ENCODE measurements at regions of chr7 and their contacts with region 1.

Region 1: DNA sequence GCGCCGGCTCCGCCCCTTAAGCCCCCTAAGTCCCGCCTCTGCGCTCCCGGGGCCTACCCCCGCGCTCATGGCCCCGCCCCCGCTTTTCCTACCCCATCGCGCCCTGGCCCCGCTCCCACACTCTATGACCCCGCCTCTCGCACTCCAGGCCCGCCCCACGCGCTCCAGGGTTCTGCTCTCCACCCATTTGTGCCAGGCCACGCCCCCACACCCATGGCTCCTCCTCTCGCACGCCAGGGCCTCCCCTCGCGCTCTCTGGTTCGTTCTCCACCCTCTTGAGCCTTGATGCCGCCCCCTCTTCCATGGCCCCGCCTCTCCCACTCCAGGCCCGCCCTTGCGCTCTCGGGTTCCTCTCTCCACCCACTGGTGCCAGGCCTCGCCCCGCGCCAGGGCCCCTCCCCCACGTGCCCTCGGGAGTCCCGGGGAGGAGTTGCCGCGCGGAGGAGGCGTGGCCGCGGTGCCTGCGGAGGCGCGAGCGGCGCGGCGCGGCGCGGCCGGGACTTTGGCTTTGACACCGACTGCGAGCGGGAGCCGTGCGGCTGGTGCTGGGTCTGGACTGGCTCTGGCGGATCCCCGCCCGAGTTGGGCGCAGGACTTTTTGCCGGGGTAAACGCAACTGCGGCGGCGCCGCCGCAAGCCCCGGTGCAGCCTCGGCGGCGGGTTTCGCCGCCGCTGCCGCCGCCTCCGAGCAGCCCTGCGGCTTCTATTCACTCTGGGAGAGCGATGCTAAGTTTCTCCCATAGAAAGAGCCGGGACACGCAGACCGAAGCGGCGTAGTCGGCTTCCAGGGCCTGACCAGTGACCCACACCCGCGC is at the start of gene EEPD1:
- DNase-seq: peak; percentile 97 to 100
- H3K4me3 ChIP-seq: peak within 1 kb of the TSS; percentile 71
- H3K27ac ChIP-seq: peak within 1 kb of the TSS; percentile 24; the same call in 1 of the 2 replicates
- H3K4me1 ChIP-seq: peaks cover 63% of the 10 kb centered on the region
- H3K27me3 ChIP-seq: no peaks in the 10 kb centered on the region
- CTCF ChIP-seq: no peak
- total RNA-seq, gene EEPD1: 6.0 and 9.4 TPM in 2 replicates

Region 2: GRCh38 chr7:35465791-35466336 is 687.1 kb before region 1 on chr7:
- CTCF ChIA-PET with region 1: no interaction called
- POLR2A ChIA-PET with region 1: no interaction called
- intact Hi-C with region 1: no loop called
- DNase-seq: no peak
- H3K4me3 ChIP-seq: no peak overlapping the region
- H3K27ac ChIP-seq: no peak overlapping the region
- H3K4me1 ChIP-seq: no peaks in the 10 kb centered on the region
- H3K27me3 ChIP-seq: no peaks in the 10 kb centered on the region
- CTCF ChIP-seq: no peak

Region 3: DNA sequence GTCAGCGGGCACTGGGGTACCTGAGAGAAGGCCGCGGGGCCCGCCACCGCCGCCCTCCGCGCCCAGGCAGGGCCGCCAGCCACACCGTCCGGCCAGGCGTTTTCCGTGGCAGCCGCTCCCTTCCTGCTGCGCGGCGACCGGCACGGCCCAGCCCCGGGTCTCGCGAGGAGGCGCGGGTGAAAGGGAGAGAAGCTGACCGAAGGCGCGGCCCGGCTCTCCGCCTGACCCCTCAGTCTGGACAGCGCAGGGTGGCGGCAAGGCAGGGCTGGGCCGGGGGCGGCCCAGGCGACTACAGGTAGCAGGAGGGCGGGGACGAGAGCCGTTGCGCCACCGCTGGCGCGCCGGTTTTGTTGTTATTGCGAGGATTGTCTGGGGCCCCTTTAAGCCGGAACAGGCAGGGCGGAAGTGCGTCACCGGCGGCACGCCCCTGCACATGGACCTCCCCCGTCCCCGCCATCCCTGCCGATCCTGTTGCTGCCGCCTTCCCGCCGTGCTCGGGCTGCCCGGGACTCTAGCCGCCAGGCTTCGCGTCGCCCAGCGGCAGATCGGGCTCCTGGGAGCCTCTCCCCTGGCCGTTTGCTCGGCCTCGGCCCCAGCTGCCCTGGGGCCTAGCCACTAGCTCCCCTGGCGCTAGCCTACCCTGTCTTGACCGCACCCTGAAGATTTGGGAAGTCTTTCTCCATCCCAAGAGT is 458.0 kb before region 1 on chr7 and contains the start of gene HERPUD2:
- CTCF ChIA-PET with region 1: no interaction called
- POLR2A ChIA-PET with region 1: no interaction called
- intact Hi-C with region 1: loop called (anchors 10 kb)
- DNase-seq: peak; percentile 92 to 99
- H3K4me3 ChIP-seq: peak within 1 kb of the TSS; percentile 96
- H3K27ac ChIP-seq: peak within 1 kb of the TSS; percentile 77
- H3K4me1 ChIP-seq: peaks cover 61% of the 10 kb centered on the region
- H3K27me3 ChIP-seq: no peaks in the 10 kb centered on the region
- CTCF ChIP-seq: no peak
- total RNA-seq, gene HERPUD2: 33.8 and 53.4 TPM in 2 replicates

Region 4: GRCh38 chr7:36037121-36037662 is 115.8 kb before region 1 on chr7:
- CTCF ChIA-PET with region 1: no interaction called
- POLR2A ChIA-PET with region 1: no interaction called
- intact Hi-C with region 1: loop called (anchors 1 kb)
- DNase-seq: peak; percentile 94 to 100
- H3K4me3 ChIP-seq: peak overlapping the region; percentile 20; the same call in 1 of the 2 replicates
- H3K27ac ChIP-seq: peak overlapping the region; percentile 87
- H3K4me1 ChIP-seq: peaks cover 75% of the 10 kb centered on the region
- H3K27me3 ChIP-seq: no peaks in the 10 kb centered on the region
- CTCF ChIP-seq: no peak

Region 5: GRCh38 chr7:36115448-36116321 is 37.3 kb before region 1 on chr7:
- CTCF ChIA-PET with region 1: no interaction called
- POLR2A ChIA-PET with region 1: no interaction called
- intact Hi-C with region 1: loop called (anchors 2 kb)
- DNase-seq: peak; percentile 93 to 97
- H3K4me3 ChIP-seq: peak overlapping the region; percentile 2; the same call in 1 of the 2 replicates
- H3K27ac ChIP-seq: peak overlapping the region; percentile 86
- H3K4me1 ChIP-seq: peaks cover 67% of the 10 kb centered on the region
- H3K27me3 ChIP-seq: no peaks in the 10 kb centered on the region
- CTCF ChIP-seq: no peak

Region 6: GRCh38 chr7:36207451-36208291 is 54.7 kb after region 1 on chr7:
- CTCF ChIA-PET with region 1: no interaction called
- POLR2A ChIA-PET with region 1: no interaction called
- intact Hi-C with region 1: loop called (anchors 5 kb)
- DNase-seq: peak; percentile 51 to 100
- H3K4me3 ChIP-seq: no peak overlapping the region
- H3K27ac ChIP-seq: peak overlapping the region; percentile 75
- H3K4me1 ChIP-seq: peaks cover 38% of the 10 kb centered on the region
- H3K27me3 ChIP-seq: no peaks in the 10 kb centered on the region
- CTCF ChIP-seq: peak; percentile 46; the same call in 1 of the 2 replicates

Region 7: DNA sequence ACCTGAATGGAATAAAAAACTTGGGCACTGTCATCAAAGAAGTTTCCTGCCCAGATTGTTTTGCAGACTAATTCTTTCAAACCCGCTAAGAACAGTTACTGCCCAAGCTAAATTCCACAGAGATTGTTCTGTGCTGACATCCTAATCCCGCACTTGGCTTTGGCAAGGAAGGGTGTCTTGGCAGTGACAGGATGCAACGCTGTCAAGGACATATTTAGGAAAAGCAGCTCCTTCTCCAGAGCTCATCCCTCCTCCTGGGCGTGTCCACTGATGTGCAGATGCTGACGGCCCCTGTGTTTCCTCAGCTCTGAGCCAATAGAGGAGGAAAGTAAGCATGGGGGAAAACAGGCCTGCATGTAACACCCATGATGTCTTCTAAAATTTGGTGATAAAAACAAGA is 74.3 kb after region 1 on chr7:
- CTCF ChIA-PET with region 1: no interaction called
- POLR2A ChIA-PET with region 1: no interaction called
- intact Hi-C with region 1: no loop called
- DNase-seq: no peak
- H3K4me3 ChIP-seq: no peak overlapping the region
- H3K27ac ChIP-seq: no peak overlapping the region
- H3K4me1 ChIP-seq: peaks cover 2% of the 10 kb centered on the region
- H3K27me3 ChIP-seq: no peaks in the 10 kb centered on the region
- CTCF ChIP-seq: no peak